Right ventricle myocardium inferior (tissue), 1 donor: ENCODE measurements at regions of chr7 and their contacts with region 1.

Region 1: GRCh38 chr7:18495412-18496340 is at the start of gene HDAC9:
- DNase-seq: peak; percentile 40
- ATAC-seq: peak; percentile 89
- total RNA-seq, gene HDAC9: 25.3 TPM

Region 2: DNA sequence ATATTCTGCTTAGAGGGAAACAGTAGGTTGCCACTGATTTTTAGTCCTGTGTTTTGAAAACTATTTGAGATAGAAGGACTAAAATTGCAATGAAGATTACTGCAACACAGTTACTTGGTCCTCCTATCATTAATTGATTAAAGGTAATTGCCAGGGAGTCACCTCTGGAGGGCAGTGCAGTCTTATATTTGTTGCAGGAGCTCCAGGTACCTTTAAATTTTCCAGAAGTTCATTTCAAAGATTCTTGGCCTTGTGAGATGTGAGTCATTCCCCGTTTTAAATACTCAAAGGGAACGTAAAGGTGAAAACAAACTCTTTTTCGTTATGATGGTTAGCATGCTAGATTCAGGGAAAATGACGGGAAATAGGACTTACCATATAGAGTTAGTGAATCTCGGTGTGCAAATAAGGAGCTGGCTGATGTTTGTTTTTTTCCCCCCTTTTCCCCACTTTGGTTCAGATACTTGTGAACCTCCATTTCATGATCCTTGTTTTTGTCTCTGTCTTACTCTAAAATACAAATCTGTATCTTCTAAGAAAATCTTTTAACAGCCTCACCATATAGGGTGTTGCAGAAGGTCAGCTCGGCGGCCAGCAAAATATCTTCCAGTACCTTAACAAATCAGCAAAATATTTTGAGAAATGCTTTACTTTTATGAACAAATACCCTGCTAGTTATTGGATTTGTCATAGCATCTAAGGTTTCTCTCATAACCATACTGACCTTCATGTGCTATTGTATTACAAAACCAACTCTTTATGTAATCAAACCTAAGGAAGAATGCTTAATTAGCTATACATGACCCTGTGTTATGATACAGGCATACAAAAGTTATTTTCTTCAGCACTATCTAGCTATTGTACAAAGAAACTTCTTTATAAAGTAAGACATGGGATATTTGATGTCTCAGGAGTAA is 143.1 kb before region 1 on chr7:
- intact Hi-C with region 1: loop called (anchors 5 kb)
- DNase-seq: no peak
- ATAC-seq: peak; percentile 44

Region 3: GRCh38 chr7:18520450-18521235 is 25.0 kb after region 1 on chr7:
- intact Hi-C with region 1: loop called (anchors 1 kb)
- DNase-seq: no peak
- ATAC-seq: no peak

Region 4: DNA sequence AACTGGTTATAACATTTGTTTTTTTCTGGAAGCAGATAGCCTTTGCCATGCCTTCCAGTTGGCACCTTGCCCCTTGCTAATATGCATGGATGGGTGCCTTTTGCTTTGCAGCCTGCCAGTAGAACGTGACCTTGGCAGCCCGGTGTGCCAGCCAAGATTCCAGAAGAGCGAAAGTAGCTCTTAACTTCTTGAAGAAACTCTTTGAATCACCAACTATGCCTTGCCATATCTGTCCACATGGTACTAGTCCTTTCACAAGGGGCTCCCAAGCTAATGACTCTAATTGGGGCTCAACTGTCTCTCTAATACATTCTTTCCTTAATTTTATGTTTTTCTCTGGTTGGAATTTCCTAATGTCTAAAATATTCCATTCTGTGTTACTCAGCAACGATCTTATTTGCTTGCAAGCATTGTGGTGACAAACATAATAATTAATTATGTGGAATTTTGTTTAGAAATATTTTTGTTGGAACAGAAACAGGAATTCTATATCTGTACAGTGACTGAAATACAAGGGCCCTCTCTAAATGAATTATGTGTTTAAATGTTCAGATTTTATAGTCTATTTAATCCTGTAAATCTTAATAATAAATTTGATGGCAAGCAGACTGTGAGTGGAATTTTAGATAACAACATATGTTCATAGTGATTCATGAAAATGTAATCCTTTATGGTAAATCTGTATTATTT is 45.6 kb after region 1 on chr7:
- intact Hi-C with region 1: loop called (anchors 5 kb)
- DNase-seq: peak; percentile 54
- ATAC-seq: peak; percentile 62

Region 5: DNA sequence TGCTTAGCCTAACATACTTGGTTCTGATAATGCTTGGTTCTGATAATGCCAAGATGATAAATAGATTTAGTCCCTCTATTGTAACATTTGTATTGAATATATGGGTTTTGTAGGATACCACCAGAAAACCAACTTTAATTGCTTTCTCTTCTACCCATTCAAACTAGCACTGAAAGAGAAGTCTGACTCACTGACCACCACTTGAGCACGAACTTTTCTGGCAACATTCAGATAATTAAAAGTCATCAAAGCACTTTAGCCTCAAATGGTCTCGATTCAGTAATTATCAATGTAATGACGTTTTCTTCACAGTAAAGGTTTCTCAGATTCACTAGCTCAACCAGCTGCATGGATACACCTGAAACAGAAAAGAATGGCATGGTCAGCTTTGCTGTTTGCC is 62.8 kb after region 1 on chr7:
- intact Hi-C with region 1: loop called (anchors 5 kb)
- DNase-seq: no peak
- ATAC-seq: no peak

Region 6: GRCh38 chr7:18570890-18571478 is 75.3 kb after region 1 on chr7:
- intact Hi-C with region 1: loop called (anchors 5 kb)
- DNase-seq: no peak
- ATAC-seq: no peak